Caco-2 (cell line): ENCODE measurements at regions of chr14 and their contacts with region 1.

Region 1: GRCh38 chr14:31229638-31230229 is 22.1 kb upstream of the HECTD1 start:
- DNase-seq: peak; percentile 93 to 95
- H3K4me3 ChIP-seq: no peak overlapping the region
- H3K4me3 Mint-ChIP-seq: peak overlapping the region; percentile 62
- H3K27ac Mint-ChIP-seq: peak overlapping the region; percentile 72
- H3K4me1 ChIP-seq: peaks cover 20% of the 10 kb centered on the region
- H3K4me1 Mint-ChIP-seq: no peaks in the 10 kb centered on the region
- H3K27me3 ChIP-seq: no peaks in the 10 kb centered on the region
- H3K27me3 Mint-ChIP-seq: no peaks in the 10 kb centered on the region
- CTCF ChIP-seq: no peak

Region 2: GRCh38 chr14:31118892-31119291 is 110.8 kb before region 1 on chr14:
- CTCF ChIA-PET with region 1: no interaction called
- POLR2A ChIA-PET with region 1: no interaction called
- intact Hi-C with region 1: no loop called
- DNase-seq: no peak
- H3K4me3 ChIP-seq: no peak overlapping the region
- H3K4me3 Mint-ChIP-seq: no peak overlapping the region
- H3K27ac Mint-ChIP-seq: no peak overlapping the region
- H3K4me1 ChIP-seq: no peaks in the 10 kb centered on the region
- H3K4me1 Mint-ChIP-seq: no peaks in the 10 kb centered on the region
- H3K27me3 ChIP-seq: no peaks in the 10 kb centered on the region
- H3K27me3 Mint-ChIP-seq: no peaks in the 10 kb centered on the region
- CTCF ChIP-seq: no peak

Region 3: DNA sequence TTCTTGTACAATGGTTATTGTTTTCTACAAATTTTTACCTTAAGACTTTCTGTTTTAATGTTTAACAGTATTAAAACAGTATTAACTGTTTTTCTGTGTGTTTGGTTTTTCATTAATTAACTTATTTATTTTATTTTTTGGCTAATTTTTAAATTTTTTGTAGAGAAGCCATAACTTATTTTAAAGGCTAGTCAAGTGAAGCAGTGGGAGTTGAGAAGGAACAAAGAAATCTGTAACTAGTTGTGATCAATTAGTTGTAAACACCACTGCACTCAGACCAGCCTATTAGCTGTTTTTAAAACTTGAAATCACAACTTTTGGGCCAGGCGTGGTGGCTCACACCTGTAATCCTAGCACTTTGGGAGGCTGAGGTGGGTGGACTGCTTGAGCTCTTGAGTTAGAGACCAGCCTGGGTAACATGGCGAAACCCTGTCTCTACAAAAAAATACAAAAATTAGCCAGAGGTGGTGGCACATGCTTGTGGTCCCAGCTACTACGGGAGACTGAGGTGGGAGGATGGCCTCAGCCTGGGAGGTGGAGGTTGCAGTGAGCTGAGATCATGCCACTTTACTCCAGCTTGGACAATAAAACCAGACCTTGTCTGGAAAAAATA is 28.8 kb after region 1 on chr14:
- CTCF ChIA-PET with region 1: interaction called, 4 read pairs
- POLR2A ChIA-PET with region 1: interaction called, 5 read pairs
- intact Hi-C with region 1: loop called (anchors 1 kb)
- DNase-seq: no peak
- H3K4me3 ChIP-seq: no peak overlapping the region
- H3K4me3 Mint-ChIP-seq: no peak overlapping the region
- H3K27ac Mint-ChIP-seq: no peak overlapping the region
- H3K4me1 ChIP-seq: peaks cover 39% of the 10 kb centered on the region
- H3K4me1 Mint-ChIP-seq: peaks cover 11% of the 10 kb centered on the region
- H3K27me3 ChIP-seq: no peaks in the 10 kb centered on the region
- H3K27me3 Mint-ChIP-seq: no peaks in the 10 kb centered on the region
- CTCF ChIP-seq: no peak

Region 4: GRCh38 chr14:31263485-31264133 is 33.9 kb after region 1 on chr14:
- CTCF ChIA-PET with region 1: interaction called, 4 read pairs
- POLR2A ChIA-PET with region 1: no interaction called
- intact Hi-C with region 1: loop called (anchors 1 kb)
- DNase-seq: peak; percentile 71 to 78
- H3K4me3 ChIP-seq: no peak overlapping the region
- H3K4me3 Mint-ChIP-seq: no peak overlapping the region
- H3K27ac Mint-ChIP-seq: peak overlapping the region; percentile 77
- H3K4me1 ChIP-seq: peaks cover 50% of the 10 kb centered on the region
- H3K4me1 Mint-ChIP-seq: peaks cover 39% of the 10 kb centered on the region
- H3K27me3 ChIP-seq: no peaks in the 10 kb centered on the region
- H3K27me3 Mint-ChIP-seq: no peaks in the 10 kb centered on the region
- CTCF ChIP-seq: no peak

Region 5: DNA sequence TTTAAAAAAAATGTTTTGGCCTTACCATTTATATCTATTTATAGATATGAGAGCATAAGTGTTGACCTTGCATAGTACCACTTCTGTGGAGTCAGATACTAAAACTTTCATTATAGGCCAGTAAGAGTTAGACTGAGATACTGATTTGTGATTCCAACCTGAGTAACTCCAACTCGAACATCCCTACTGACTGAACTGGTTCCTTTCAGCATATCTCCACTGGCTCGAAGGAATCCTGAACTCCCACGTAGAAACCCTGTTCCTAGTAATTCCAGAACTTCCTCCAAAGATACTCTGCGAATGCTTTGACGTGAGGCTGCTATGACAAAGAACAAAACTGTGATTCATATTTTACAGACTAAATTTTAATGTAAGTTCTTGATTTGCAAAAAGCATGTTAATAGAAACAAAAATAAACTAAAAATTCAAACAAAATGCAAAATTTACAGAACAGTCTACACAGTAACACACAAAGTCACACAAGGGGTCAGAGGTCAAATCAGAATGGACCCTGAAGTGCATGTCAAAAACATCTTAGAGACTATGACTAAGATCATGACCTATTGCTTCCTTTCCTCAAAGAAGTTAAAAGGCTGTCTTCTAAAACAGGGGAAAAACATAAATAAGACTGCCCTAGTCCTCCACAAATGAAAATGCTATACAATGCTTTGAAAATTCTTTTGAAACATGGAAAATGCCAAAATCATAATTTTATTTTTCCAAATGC is 159.1 kb after region 1 on chr14:
- CTCF ChIA-PET with region 1: no interaction called
- POLR2A ChIA-PET with region 1: no interaction called
- intact Hi-C with region 1: no loop called
- DNase-seq: no peak
- H3K4me3 ChIP-seq: no peak overlapping the region
- H3K4me3 Mint-ChIP-seq: no peak overlapping the region
- H3K27ac Mint-ChIP-seq: no peak overlapping the region
- H3K4me1 ChIP-seq: no peaks in the 10 kb centered on the region
- H3K4me1 Mint-ChIP-seq: no peaks in the 10 kb centered on the region
- H3K27me3 ChIP-seq: no peaks in the 10 kb centered on the region
- H3K27me3 Mint-ChIP-seq: no peaks in the 10 kb centered on the region
- CTCF ChIP-seq: no peak